ENCODE measurements at regions of chr2 and their contacts with region 1.

Region 1: GRCh38 chr2:12728221-12728777 is 11.6 kb downstream of the TRIB2 start:
- DNase-seq: no peak
- H3K4me3 ChIP-seq: no peak overlapping the region
- CTCF ChIP-seq: no peak

Region 2: GRCh38 chr2:12456293-12457151 is 271.8 kb before region 1 on chr2:
- in situ Hi-C with region 1: no loop called
- DNase-seq: peak; percentile 79
- H3K4me3 ChIP-seq: no peak overlapping the region
- CTCF ChIP-seq: no peak

Region 3: GRCh38 chr2:12694990-12695774 is 33.1 kb before region 1 on chr2:
- in situ Hi-C with region 1: no loop called
- DNase-seq: no peak
- H3K4me3 ChIP-seq: no peak overlapping the region
- CTCF ChIP-seq: no peak

Region 4: DNA sequence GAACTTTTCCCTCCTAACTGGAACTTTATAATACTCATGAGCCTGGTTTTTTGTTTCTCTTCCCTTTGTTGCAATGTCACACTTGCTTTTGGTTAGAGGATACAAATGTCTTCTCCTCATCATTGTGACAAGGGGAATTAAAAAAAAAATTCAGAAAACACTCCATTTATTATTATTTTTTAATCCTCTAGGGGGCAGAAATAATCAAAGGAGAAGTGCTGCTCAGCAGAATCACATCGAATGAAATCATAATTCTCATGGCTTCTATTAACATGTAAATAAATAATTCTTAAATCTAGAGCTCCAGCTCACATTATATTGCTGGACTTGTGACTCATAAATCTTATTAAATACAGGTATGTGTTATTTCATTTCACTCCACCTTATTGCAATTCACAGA is 262.2 kb after region 1 on chr2:
- in situ Hi-C with region 1: loop called (anchors 10 kb)
- DNase-seq: no peak
- H3K4me3 ChIP-seq: no peak overlapping the region
- CTCF ChIP-seq: peak; percentile 25

Measured in astrocyte of the cerebellum (primary cell).